ENCODE measurements at regions of chr17 and their contacts with region 1.

Region 1: GRCh38 chr17:31549525-31550388 is 158.3 kb downstream of the RAB11FIP4 start:
- DNase-seq: peak; percentile 87

Region 2: DNA sequence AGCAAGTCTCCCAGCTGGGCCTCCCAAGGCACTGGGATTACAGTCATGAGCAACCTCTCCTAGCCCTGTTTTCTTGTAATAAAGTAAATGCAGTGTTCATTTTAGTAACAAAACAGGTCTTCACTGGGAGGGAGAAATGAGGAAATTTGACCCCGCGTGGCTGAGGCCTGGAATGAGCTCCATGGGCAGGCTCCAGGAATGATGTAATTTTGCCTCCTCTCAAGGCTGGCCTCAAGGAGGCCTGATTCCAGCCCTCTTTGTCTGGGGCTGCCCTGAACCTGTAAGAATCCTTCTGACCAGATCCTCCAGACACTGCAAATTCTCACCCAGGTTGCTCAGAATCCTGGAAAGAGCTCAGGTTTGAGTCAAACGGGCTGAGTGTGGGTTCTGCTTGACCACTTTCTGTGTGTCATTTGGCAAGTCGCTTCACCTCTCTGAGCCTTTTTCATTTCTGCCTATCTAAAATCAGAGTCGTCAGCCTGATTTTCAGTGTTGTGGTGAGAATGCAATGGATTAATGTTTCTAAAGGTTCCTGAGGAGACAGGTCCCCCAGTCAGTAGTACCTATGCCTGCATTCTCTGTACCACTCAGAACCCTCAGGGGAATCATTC is 101.2 kb before region 1 on chr17:
- CTCF ChIA-PET with region 1: no interaction called
- POLR2A ChIA-PET with region 1: no interaction called
- DNase-seq: peak; percentile 14

Region 3: DNA sequence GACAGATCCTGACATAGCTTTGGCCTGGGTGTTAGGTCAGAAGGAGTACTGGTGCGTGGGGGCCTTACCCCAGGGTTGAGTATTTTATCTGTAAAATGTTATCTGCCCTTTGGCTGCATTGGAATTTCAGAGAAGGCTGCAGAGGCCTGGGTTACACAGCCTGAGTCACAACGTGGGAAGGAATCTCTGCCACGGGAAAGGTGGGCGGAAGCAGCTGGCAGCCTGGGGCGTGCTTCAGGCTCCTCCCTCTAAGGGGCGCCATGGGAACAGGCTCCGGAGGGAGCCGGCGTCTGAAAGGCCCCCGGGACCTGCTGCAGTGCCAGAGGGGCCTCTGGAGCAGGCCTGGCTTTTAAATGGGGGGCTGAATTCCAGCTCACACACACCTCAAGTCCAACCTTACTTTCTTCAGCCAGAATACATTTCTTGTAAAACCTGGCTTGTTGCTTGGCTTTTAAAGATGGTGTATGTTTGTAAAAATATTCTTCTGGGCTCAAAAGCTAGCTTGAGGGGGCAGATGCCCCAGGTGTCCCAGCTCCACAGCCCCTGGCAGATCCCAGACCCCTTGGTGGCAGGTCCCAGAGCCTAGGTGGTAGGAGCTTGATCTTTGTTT is 16.1 kb before region 1 on chr17:
- CTCF ChIA-PET with region 1: interaction called, 4 read pairs
- POLR2A ChIA-PET with region 1: interaction called, 12 read pairs
- DNase-seq: peak; percentile 43

Region 4: GRCh38 chr17:31566994-31567373 is 17.2 kb after region 1 on chr17:
- CTCF ChIA-PET with region 1: no interaction called
- POLR2A ChIA-PET with region 1: no interaction called
- DNase-seq: no peak

Region 5: DNA sequence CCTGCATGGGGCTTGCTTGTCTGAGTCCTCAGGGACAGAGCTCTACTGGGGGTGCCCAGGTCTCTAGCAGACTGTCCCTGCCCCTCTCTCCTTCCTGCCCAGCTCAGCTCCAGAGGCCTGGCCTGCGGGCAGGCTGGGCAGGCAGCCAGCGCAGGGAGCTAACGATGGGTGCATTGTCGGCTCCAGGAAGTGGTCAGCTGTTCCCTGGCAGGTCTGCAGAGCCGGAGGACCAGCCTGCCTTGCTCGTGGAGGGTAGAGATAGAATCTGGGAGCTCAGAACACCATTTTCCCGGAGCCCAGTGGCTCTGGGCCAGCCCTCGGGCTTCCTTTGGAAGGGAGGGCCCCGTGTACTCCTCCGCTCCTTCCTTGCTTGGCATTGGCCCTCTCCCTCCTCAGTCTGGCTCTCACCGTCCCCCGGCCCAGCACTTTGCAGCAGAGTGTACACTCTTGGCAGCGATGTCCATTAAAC is 31.3 kb after region 1 on chr17:
- CTCF ChIA-PET with region 1: no interaction called
- POLR2A ChIA-PET with region 1: no interaction called
- DNase-seq: no peak

Measured in HEK293T (cell line).